Mammary epithelial cell (primary cell): ENCODE measurements at regions of chr9 and their contacts with region 1.

Region 1: DNA sequence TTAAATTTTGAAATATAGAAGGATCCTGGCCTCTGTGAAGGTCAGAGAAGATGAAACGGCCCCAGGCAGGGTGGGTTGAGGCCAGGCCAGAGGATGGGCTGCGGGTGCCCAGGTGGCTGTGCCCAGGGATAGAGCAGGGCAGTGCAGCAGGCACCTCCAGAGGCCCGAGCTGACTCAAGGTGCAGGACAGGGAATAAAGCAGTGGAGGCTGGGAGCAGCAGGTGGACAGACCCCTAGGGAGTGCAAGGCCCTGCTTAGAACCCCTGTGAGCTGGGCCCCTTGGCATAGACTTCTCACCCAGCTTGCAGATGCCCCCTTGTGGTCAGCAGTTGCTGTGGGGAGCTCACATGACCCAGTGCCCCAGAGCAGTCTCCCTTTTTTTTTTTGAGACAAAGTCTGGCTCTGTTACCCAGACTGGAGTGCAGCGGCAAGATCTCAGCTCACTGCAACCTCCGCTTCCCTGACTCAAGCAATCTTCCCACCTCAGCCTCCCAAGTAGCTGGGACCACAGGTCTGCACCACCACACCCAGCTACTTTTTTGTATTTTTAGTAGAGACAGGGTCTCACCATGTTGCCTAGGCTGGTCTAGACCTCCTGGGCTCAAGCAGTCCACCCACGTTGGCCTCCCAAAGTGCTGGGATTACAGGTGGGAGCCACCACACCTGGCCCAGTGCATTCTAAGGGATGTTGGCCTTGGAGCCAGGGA is 118.8 kb downstream of the WNK2 start:
- DNase-seq: peak; percentile 39
- H3K4me3 ChIP-seq: no peak overlapping the region
- H3K27ac ChIP-seq: no peak overlapping the region
- H3K4me1 ChIP-seq: no peaks in the 10 kb centered on the region
- H3K27me3 ChIP-seq: no peaks in the 10 kb centered on the region
- CTCF ChIP-seq: peak; percentile 44 to 73

Region 2: GRCh38 chr9:92954049-92954861 is 348.4 kb before region 1 on chr9:
- CTCF ChIA-PET with region 1: interaction called, 4 read pairs
- dilution Hi-C with region 1: no loop called
- in situ Hi-C with region 1: no loop called
- intact Hi-C with region 1: loop called (anchors 1 kb)
- DNase-seq: peak; percentile 89
- H3K4me3 ChIP-seq: no peak overlapping the region
- H3K27ac ChIP-seq: peak overlapping the region; percentile 38
- H3K4me1 ChIP-seq: peaks cover 20% of the 10 kb centered on the region
- H3K27me3 ChIP-seq: no peaks in the 10 kb centered on the region
- CTCF ChIP-seq: no peak

Region 3: GRCh38 chr9:93003552-93004407 is 298.9 kb before region 1 on chr9:
- CTCF ChIA-PET with region 1: interaction called, 5 read pairs
- dilution Hi-C with region 1: no loop called
- in situ Hi-C with region 1: loop called in 1 of 2 experiments (anchors 25 kb)
- intact Hi-C with region 1: loop called (anchors 1 kb)
- DNase-seq: peak; percentile 42
- H3K4me3 ChIP-seq: no peak overlapping the region
- H3K27ac ChIP-seq: no peak overlapping the region
- H3K4me1 ChIP-seq: no peaks in the 10 kb centered on the region
- H3K27me3 ChIP-seq: no peaks in the 10 kb centered on the region
- CTCF ChIP-seq: peak; percentile 52 to 78

Region 4: GRCh38 chr9:93108291-93109041 is 194.2 kb before region 1 on chr9:
- CTCF ChIA-PET with region 1: no interaction called
- dilution Hi-C with region 1: no loop called
- in situ Hi-C with region 1: no loop called
- intact Hi-C with region 1: loop called (anchors 1 kb)
- DNase-seq: no peak
- H3K4me3 ChIP-seq: no peak overlapping the region
- H3K27ac ChIP-seq: no peak overlapping the region
- H3K4me1 ChIP-seq: peaks cover 18% of the 10 kb centered on the region
- H3K27me3 ChIP-seq: no peaks in the 10 kb centered on the region
- CTCF ChIP-seq: no peak

Region 5: DNA sequence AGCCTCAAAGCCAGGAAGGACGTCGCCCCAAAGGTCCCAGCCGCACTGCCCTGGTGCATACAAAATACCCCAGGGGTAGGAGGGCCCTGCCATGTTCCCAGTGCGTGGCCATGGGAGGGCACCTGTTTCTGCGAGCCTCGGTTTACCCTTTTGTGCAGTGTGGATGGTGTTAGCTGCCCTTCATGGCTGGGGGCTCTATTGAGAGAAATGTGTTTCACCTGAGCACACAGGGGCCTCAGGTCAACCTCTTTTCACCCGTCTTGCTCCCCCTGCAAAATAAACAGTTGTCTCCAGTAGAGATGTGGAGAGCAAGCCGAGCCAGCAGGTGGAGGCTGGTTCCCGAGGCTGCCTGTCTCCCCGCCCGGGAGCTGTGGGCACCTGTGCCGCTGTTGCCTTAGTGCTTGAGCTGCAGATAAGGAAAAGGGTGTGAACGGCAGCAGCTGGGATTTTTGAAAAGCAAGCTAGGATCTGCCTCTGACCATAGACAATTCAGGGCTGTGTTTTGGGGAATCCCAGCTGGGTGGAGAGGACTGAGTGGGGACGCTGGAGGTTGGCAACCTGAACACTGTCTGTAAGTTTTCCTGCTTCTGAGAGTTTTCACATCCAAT is 109.5 kb before region 1 on chr9:
- CTCF ChIA-PET with region 1: interaction called, 6 read pairs
- dilution Hi-C with region 1: no loop called
- in situ Hi-C with region 1: no loop called
- intact Hi-C with region 1: loop called (anchors 1 kb)
- DNase-seq: peak; percentile 29
- H3K4me3 ChIP-seq: no peak overlapping the region
- H3K27ac ChIP-seq: no peak overlapping the region
- H3K4me1 ChIP-seq: no peaks in the 10 kb centered on the region
- H3K27me3 ChIP-seq: no peaks in the 10 kb centered on the region
- CTCF ChIP-seq: peak in 1 of 2 donors; percentile 45

Region 6: DNA sequence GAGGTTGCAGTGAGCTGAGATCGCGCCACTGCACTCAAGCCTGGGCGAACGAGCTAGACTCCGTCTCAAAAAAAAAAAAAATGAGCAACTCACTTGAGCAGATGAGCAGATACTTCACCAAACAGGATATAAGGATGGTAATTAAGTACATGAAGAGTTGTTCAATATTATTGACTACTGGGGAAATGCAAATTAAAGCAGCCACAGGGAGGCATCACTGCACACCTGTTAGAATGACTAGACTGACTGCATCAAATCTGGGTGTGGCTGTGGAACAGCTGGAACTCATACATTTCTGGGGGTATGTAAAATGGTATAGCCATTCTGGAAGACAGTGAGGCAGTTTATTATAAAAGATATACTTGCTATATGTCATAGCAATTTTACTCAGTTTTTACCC is 25.7 kb before region 1 on chr9:
- CTCF ChIA-PET with region 1: no interaction called
- dilution Hi-C with region 1: no loop called
- in situ Hi-C with region 1: no loop called
- intact Hi-C with region 1: loop called (anchors 2 kb)
- DNase-seq: no peak
- H3K4me3 ChIP-seq: no peak overlapping the region
- H3K27ac ChIP-seq: no peak overlapping the region
- H3K4me1 ChIP-seq: peaks cover 12% of the 10 kb centered on the region
- H3K27me3 ChIP-seq: no peaks in the 10 kb centered on the region
- CTCF ChIP-seq: peak; percentile 2 to 20

Region 7: DNA sequence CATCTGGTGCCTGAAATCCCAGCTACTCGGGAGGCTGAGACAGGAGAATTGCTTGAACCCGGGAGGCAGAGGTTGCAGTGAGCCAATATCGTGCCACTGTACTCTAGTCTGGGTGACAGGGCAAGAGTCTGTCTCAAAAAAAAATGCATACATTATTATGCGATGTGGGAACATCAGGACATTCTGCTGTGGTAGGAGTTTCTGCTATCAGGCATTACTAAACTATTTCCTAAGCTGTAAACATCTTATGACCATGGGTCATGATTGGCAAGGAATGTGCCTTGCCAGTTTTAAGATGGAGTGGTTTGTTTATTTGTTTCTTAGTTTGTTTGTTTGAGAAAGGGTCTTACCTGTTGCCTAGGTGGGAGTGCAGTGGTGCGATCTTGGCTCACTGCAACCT is 103.7 kb after region 1 on chr9:
- CTCF ChIA-PET with region 1: no interaction called
- dilution Hi-C with region 1: no loop called
- in situ Hi-C with region 1: no loop called
- intact Hi-C with region 1: no loop called
- DNase-seq: no peak
- H3K4me3 ChIP-seq: no peak overlapping the region
- H3K27ac ChIP-seq: no peak overlapping the region
- H3K4me1 ChIP-seq: no peaks in the 10 kb centered on the region
- H3K27me3 ChIP-seq: no peaks in the 10 kb centered on the region
- CTCF ChIP-seq: no peak

Region 8: GRCh38 chr9:94183240-94183999 is 880.7 kb after region 1 on chr9:
- CTCF ChIA-PET with region 1: no interaction called
- dilution Hi-C with region 1: no loop called
- in situ Hi-C with region 1: no loop called
- intact Hi-C with region 1: no loop called
- DNase-seq: no peak
- H3K4me3 ChIP-seq: no peak overlapping the region
- H3K27ac ChIP-seq: no peak overlapping the region
- H3K4me1 ChIP-seq: no peaks in the 10 kb centered on the region
- H3K27me3 ChIP-seq: no peaks in the 10 kb centered on the region
- CTCF ChIP-seq: no peak